Adrenal gland (tissue), 19 donors: ENCODE measurements at regions of chr21 and their contacts with region 1.

Region 1: GRCh38 chr21:42905195-42905594 is 12.1 kb downstream of the NDUFV3 start:
- DNase-seq: no peak
- H3K4me3 ChIP-seq: no peak overlapping the region
- H3K27ac ChIP-seq: no peak overlapping the region
- H3K4me1 ChIP-seq: no peaks in the 10 kb centered on the region
- H3K27me3 ChIP-seq: no peaks in the 10 kb centered on the region
- CTCF ChIP-seq: no peak
- POLR2A ChIP-seq: no peak

Region 2: GRCh38 chr21:42414928-42415769 is 490.0 kb before region 1 on chr21:
- intact Hi-C with region 1: no loop called
- DNase-seq: peak in 6 of 7 donors; percentile 40 to 77 (median 60)
- H3K4me3 ChIP-seq: no peak overlapping the region
- H3K27ac ChIP-seq: no peak overlapping the region
- H3K4me1 ChIP-seq: no peaks in the 10 kb centered on the region
- H3K27me3 ChIP-seq: no peaks in the 10 kb centered on the region
- CTCF ChIP-seq: no peak
- POLR2A ChIP-seq: no peak

Region 3: GRCh38 chr21:42711667-42712066 is 193.5 kb before region 1 on chr21:
- intact Hi-C with region 1: no loop called
- DNase-seq: no peak
- H3K4me3 ChIP-seq: no peak overlapping the region
- H3K27ac ChIP-seq: no peak overlapping the region
- H3K4me1 ChIP-seq: no peaks in the 10 kb centered on the region
- H3K27me3 ChIP-seq: no peaks in the 10 kb centered on the region
- CTCF ChIP-seq: no peak
- POLR2A ChIP-seq: no peak

Region 4: DNA sequence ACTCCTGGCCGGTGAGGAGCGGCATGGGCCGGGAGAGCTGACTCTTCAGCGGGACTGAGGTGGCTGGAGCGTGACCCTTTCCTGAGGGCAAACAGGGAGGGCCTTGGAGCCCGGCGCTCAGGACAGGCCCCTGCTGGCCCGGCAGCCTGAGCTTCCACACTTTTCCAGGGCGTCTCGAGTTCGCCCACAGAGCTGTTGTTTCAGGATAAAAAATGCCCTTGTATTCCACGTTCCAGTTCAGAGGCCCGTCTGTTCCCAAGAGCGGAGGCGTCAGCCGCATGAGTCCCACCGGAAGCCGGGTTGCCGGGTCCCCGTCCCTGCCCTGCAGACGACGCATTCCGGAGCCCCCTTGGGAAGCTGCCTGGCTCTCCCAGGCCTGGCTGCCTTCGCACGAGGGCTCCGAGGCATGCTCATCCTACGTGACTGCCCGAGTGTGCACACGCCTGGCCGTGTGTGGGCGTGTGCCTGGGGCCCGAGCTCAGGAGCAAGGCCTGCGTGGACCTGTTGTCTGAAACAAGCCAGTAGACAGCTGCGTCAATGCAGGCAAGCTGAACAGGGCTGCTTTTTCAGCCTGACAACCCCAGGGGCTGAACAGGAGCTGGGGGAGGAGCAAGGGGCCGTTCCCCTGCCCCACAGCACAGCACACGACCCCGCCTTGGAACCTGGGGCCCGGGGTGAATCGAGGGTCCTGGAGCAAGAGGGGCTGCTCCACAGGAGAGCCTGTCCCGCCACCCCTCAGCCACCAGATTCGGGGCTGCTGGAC is 395.8 kb after region 1 on chr21:
- intact Hi-C with region 1: no loop called
- DNase-seq: peak in 2 of 7 donors; percentile 26 to 63
- H3K4me3 ChIP-seq: no peak overlapping the region
- H3K27ac ChIP-seq: no peak overlapping the region
- H3K4me1 ChIP-seq: no peaks in the 10 kb centered on the region
- H3K27me3 ChIP-seq: no peaks in the 10 kb centered on the region
- CTCF ChIP-seq: no peak
- POLR2A ChIP-seq: no peak

Region 5: GRCh38 chr21:43659136-43660000 is 754.2 kb after region 1 on chr21 and contains the starts of genes HSF2BP and RRP1B:
- intact Hi-C with region 1: loop called in 1 of 2 experiments (anchors 10 kb)
- DNase-seq: peak; percentile 76 to 89 (median 83)
- H3K4me3 ChIP-seq: peak within 1 kb of the TSS; percentile 36 to 96 (median 60)
- H3K27ac ChIP-seq: peak within 1 kb of the TSS in 4 of 5 donors; percentile 68 to 95 (median 82)
- H3K4me1 ChIP-seq: peaks cover 7 to 20% of the 10 kb centered on the region in 2 donors
- H3K27me3 ChIP-seq: no peaks in the 10 kb centered on the region
- CTCF ChIP-seq: peak in 2 of 6 experiments; percentile 12 to 21
- POLR2A ChIP-seq: peak; percentile 72 to 86
- total RNA-seq, gene HSF2BP: 0.23 to 1.5 (median 0.47) TPM in 7 of 9 donors, not detected in the others
- total RNA-seq, gene RRP1B: 7.0 to 18.6 (median 16.1) TPM